Heart right ventricle (tissue), 16 donors: ENCODE measurements at regions of chr10 and their contacts with region 1.

Region 1: GRCh38 chr10:84139126-84140035 is at the start of gene GHITM:
- DNase-seq: peak; percentile 99 to 100
- ATAC-seq: peak; percentile 99 to 100 (median 100)
- H3K4me3 ChIP-seq: peak within 1 kb of the TSS; percentile 76 to 100 (median 94)
- H3K27ac ChIP-seq: peak within 1 kb of the TSS; percentile 89 to 100 (median 97)
- H3K4me1 ChIP-seq: peaks cover 0 to 31% (median 21%) of the 10 kb centered on the region in 9 donors
- H3K27me3 ChIP-seq: no peaks in the 10 kb centered on the region
- CTCF ChIP-seq: peak in 8 of 9 donors; percentile 19 to 45 (median 40)
- total RNA-seq, gene GHITM: 316 to 552 (median 463) TPM

Region 2: GRCh38 chr10:83127942-83128575 is 1011.3 kb before region 1 on chr10:
- intact Hi-C with region 1: no loop called
- DNase-seq: no peak
- ATAC-seq: no peak
- H3K4me3 ChIP-seq: no peak overlapping the region
- H3K27ac ChIP-seq: no peak overlapping the region
- H3K4me1 ChIP-seq: no peaks in the 10 kb centered on the region
- H3K27me3 ChIP-seq: no peaks in the 10 kb centered on the region
- CTCF ChIP-seq: no peak

Region 3: DNA sequence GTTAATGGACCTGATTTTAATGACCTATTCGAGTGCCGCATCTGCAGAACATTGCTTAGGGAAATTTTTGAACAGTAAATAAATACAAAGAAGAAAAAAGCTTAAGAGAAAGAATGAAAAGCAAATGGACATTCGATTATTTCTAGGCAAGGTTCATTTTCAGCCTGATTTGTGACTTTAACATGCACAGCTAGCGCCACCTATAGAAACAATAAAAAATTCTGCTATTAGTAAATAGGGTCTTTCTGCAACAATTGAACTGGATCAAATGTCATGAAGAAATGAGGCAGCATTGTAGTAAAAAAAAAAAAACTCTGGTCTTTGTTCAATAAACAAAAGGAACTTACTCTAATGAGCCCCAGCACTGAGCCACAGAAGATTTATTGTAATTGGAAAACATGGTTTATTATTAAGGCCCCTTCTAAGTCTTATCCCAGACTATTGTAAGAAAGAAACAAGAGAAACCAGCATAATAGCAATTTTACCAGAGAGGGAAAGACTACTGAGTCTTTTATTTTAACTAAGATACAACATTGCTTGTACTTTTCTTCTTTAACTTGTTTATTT is 41.5 kb before region 1 on chr10:
- intact Hi-C with region 1: no loop called
- DNase-seq: no peak
- ATAC-seq: no peak
- H3K4me3 ChIP-seq: no peak overlapping the region
- H3K27ac ChIP-seq: no peak overlapping the region
- H3K4me1 ChIP-seq: peaks cover 5 to 25% (median 19%) of the 10 kb centered on the region in 9 donors
- H3K27me3 ChIP-seq: no peaks in the 10 kb centered on the region
- CTCF ChIP-seq: peak in 8 of 9 donors; percentile 34 to 69 (median 56)

Region 4: GRCh38 chr10:84205049-84205852 is 65.9 kb after region 1 on chr10:
- intact Hi-C with region 1: loop called in 1 of 10 experiments (anchors 10 kb)
- DNase-seq: peak; percentile 45 to 54
- ATAC-seq: peak; percentile 40 to 74 (median 62)
- H3K4me3 ChIP-seq: no peak overlapping the region
- H3K27ac ChIP-seq: no peak overlapping the region
- H3K4me1 ChIP-seq: no peaks in the 10 kb centered on the region
- H3K27me3 ChIP-seq: peaks cover 0 to 13% (median 3%) of the 10 kb centered on the region in 7 donors
- CTCF ChIP-seq: peak; percentile 34 to 76 (median 66)

Region 5: GRCh38 chr10:84328418-84329195 is 189.2 kb after region 1 on chr10 and contains the start of gene CCSER2:
- intact Hi-C with region 1: loop called in 2 of 10 experiments (anchors 10 kb)
- DNase-seq: peak; percentile 97 to 98
- ATAC-seq: peak; percentile 96 to 99 (median 98)
- H3K4me3 ChIP-seq: peak within 1 kb of the TSS; percentile 44 to 97 (median 88)
- H3K27ac ChIP-seq: peak within 1 kb of the TSS; percentile 82 to 99 (median 97)
- H3K4me1 ChIP-seq: peaks cover 2 to 46% (median 34%) of the 10 kb centered on the region in 9 donors
- H3K27me3 ChIP-seq: no peaks in the 10 kb centered on the region
- CTCF ChIP-seq: peak in 2 of 9 donors; percentile 30 to 32
- total RNA-seq, gene CCSER2: 124 to 252 (median 219) TPM

Region 6: DNA sequence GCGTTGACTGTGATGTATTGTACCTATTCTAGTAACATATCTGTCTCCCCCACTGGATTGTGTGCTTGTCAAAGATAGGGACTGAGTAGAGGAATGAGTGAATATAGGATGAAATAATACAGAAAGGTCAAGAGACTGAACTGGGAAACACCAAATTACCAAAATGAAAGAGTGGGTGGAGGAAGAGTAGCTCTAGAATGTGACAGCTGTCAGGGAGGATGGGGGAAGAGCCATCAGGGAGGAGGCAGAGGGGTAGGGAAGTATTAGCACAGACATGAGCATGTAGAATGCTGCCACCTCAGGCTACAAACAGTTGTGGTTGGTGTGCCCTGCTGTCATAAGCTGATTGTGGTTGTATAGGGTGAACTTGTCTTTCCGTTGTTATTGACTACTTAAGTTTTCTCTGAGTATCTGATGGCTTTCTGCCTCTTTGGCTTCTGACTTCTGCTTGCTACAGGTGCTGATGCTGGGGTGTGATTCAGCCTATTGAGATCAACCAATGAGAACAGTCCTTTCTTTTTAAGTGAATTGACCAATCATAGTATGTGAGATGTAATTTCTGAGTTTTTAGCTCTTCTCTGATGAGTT is 194.6 kb after region 1 on chr10:
- intact Hi-C with region 1: loop called in 2 of 10 experiments (anchors 10 kb)
- DNase-seq: no peak
- ATAC-seq: peak in 3 of 8 donors; percentile 36 to 57 (median 43)
- H3K4me3 ChIP-seq: no peak overlapping the region
- H3K27ac ChIP-seq: peak overlapping the region in 1 of 10 donors; percentile 17
- H3K4me1 ChIP-seq: peaks cover 2 to 90% (median 82%) of the 10 kb centered on the region in 9 donors
- H3K27me3 ChIP-seq: no peaks in the 10 kb centered on the region
- CTCF ChIP-seq: no peak

Region 7: GRCh38 chr10:84563868-84564267 is 424.5 kb after region 1 on chr10:
- intact Hi-C with region 1: no loop called
- DNase-seq: no peak
- ATAC-seq: no peak
- H3K4me3 ChIP-seq: no peak overlapping the region
- H3K27ac ChIP-seq: no peak overlapping the region
- H3K4me1 ChIP-seq: no peaks in the 10 kb centered on the region
- H3K27me3 ChIP-seq: peaks cover 4 to 53% (median 19%) of the 10 kb centered on the region in 7 donors
- CTCF ChIP-seq: no peak